ENCODE measurements at regions of chr7 and their contacts with region 1.

Region 1: DNA sequence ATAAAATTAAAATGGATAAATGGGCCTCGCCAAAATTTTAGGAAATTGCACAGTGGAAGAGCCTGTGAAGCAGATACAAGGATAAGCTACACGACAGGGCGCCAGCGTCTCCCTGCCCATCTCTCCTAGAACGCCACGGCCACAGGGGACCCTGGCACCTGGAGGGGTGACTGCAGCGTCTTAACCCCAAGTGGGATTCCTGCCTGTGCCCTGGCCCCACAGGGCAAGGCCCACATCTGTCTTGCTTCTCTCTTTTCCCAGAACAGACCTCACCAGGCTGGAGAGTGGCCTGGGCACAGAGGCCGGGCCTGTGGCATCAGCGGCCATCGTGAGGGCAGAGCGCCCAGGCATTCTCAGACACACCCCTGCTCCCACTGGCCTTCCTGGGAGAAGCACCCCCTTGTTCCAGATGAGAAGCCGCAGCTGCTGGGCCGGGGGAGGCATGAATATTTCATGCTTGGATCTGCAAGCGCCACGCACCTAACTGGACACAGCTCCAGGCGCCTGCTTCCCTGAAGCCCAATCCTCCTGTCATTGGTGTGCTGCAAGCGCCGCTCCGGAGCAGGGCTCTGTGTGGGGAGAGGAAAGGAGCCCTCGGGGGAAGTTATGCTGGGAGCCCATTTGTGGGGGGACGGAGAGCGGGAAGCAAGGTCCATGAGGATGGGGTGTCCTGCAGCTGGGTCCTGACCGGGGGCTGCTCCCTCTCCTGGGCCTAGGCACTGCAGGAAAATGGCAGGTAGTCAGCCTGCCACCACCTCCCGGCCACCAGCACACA is 153.5 kb downstream of the ELFN1 start:
- DNase-seq: no peak
- ATAC-seq: no peak
- H3K4me3 ChIP-seq: no peak overlapping the region
- H3K27ac ChIP-seq: no peak overlapping the region
- H3K4me1 ChIP-seq: no peaks in the 10 kb centered on the region
- H3K27me3 ChIP-seq: no peaks in the 10 kb centered on the region
- CTCF ChIP-seq: no peak
- EP300 ChIP-seq: no peak
- POLR2A ChIP-seq: no peak
- RAD21 ChIP-seq: no peak

Region 2: GRCh38 chr7:1812509-1813393 is 10.8 kb before region 1 on chr7:
- CTCF ChIA-PET with region 1: no interaction called
- POLR2A ChIA-PET with region 1: no interaction called
- RAD21 ChIA-PET with region 1: no interaction called
- SMC1A ChIA-PET with region 1: no interaction called
- in situ Hi-C with region 1: no loop called
- intact Hi-C with region 1: loop called (anchors 1 kb)
- DNase-seq: no peak
- ATAC-seq: peak; percentile 62
- H3K4me3 ChIP-seq: no peak overlapping the region
- H3K27ac ChIP-seq: no peak overlapping the region
- H3K4me1 ChIP-seq: no peaks in the 10 kb centered on the region
- H3K27me3 ChIP-seq: no peaks in the 10 kb centered on the region
- CTCF ChIP-seq: peak; percentile 13 to 35 (median 21); a peak in 2 of 6 replicates
- EP300 ChIP-seq: no peak
- POLR2A ChIP-seq: no peak
- RAD21 ChIP-seq: no peak